ENCODE measurements at regions of chr15 and their contacts with region 1.

Region 1: GRCh38 chr15:65077981-65078352 is 1.4 kb downstream of the KBTBD13 start:
- DNase-seq: peak; percentile 84 to 85
- H3K4me3 ChIP-seq: no peak overlapping the region
- H3K27ac ChIP-seq: no peak overlapping the region
- H3K4me1 ChIP-seq: peaks cover 3 to 13% (median 7%) of the 10 kb centered on the region in 4 experiments; a peak in 5 of 7 replicates
- H3K27me3 ChIP-seq: peaks cover 0 to 9% (median 8%) of the 10 kb centered on the region in 4 experiments; a peak in 5 of 7 replicates
- CTCF ChIP-seq: peak; percentile 77 to 95 (median 86)
- EP300 ChIP-seq: no peak
- POLR2A ChIP-seq: no peak
- RAD21 ChIP-seq: peak; percentile 69 to 74

Region 2: DNA sequence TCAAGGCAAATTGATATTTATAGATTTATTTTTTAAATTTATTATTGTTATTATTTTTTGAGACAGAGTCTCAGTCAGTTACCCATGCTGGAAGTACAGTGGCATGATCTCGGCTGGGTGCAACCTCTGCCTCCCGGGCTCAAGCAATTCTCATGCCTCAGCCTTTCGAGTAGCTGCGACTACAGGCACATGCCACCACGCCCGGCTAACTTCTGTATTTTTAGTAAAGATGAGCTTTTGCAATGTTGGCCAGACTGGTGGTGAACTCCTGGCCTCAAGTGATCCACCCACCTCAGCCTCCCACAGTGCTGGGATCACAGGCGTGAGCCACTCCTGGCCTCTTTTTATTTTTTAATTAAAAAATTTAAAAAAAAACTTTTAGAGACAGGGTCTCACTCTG is 107.3 kb before region 1 on chr15:
- CTCF ChIA-PET with region 1: no interaction called
- POLR2A ChIA-PET with region 1: no interaction called
- DNase-seq: no peak
- H3K4me3 ChIP-seq: no peak overlapping the region
- H3K27ac ChIP-seq: no peak overlapping the region
- H3K4me1 ChIP-seq: no peaks in the 10 kb centered on the region
- H3K27me3 ChIP-seq: no peaks in the 10 kb centered on the region
- CTCF ChIP-seq: no peak
- EP300 ChIP-seq: no peak
- POLR2A ChIP-seq: no peak
- RAD21 ChIP-seq: no peak

Region 3: GRCh38 chr15:65049418-65049840 is 28.5 kb before region 1 on chr15:
- CTCF ChIA-PET with region 1: interaction called, 1,213 read pairs
- POLR2A ChIA-PET with region 1: interaction called, 3 read pairs
- DNase-seq: peak; percentile 61 to 88
- H3K4me3 ChIP-seq: peak overlapping the region in 2 of 4 experiments; percentile 15 to 44; a peak in 4 of 8 replicates
- H3K27ac ChIP-seq: no peak overlapping the region
- H3K4me1 ChIP-seq: no peaks in the 10 kb centered on the region; a peak in 1 of 7 replicates
- H3K27me3 ChIP-seq: no peaks in the 10 kb centered on the region; a peak in 2 of 7 replicates
- CTCF ChIP-seq: no peak
- EP300 ChIP-seq: no peak
- POLR2A ChIP-seq: no peak
- RAD21 ChIP-seq: no peak

Region 4: DNA sequence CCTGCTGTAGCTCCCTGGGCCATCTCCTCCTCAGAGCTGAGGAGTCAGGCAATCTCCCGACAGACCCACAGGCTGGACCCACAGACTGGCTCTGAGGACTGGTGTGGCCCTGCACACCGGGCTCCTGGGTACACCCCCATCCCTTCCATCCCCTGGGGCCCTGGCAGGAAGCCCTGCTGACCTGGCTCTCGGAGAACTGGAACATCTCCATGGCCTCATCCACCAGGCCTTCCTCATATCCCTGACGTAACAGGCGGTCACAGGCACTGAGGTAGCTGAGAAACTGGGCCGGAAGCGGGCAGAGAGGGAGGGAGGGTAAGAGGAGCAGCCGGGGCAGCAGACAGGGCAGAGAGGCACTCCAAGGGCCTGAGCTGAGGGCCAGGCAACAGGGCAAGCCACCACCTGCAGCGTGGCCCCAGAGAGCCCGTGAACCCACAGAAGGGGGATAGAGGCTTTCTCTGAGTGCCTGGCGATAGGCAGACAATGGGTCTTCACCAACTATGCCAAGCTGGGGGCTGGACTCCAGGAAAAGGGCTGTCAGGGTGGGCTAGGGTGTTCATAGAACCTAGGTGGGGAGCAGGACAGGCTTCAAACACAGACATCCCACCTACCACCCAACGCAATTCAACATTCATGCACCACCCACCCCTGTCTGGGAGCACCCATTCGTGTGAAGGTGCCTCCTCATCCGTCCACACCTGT is 16.5 kb after region 1 on chr15:
- CTCF ChIA-PET with region 1: interaction called, 259 read pairs
- POLR2A ChIA-PET with region 1: interaction called, 3 read pairs
- DNase-seq: no peak
- H3K4me3 ChIP-seq: no peak overlapping the region
- H3K27ac ChIP-seq: no peak overlapping the region; the same call in 1 of the 2 replicates
- H3K4me1 ChIP-seq: peaks cover 0 to 3% (median under 1%) of the 10 kb centered on the region in 4 experiments; a peak in 2 of 7 replicates
- H3K27me3 ChIP-seq: no peaks in the 10 kb centered on the region
- CTCF ChIP-seq: no peak
- EP300 ChIP-seq: no peak
- POLR2A ChIP-seq: no peak
- RAD21 ChIP-seq: no peak

Measured in H1 (cell line).